Mammary epithelial cell (primary cell): ENCODE measurements at regions of chr6 and their contacts with region 1.

Region 1: DNA sequence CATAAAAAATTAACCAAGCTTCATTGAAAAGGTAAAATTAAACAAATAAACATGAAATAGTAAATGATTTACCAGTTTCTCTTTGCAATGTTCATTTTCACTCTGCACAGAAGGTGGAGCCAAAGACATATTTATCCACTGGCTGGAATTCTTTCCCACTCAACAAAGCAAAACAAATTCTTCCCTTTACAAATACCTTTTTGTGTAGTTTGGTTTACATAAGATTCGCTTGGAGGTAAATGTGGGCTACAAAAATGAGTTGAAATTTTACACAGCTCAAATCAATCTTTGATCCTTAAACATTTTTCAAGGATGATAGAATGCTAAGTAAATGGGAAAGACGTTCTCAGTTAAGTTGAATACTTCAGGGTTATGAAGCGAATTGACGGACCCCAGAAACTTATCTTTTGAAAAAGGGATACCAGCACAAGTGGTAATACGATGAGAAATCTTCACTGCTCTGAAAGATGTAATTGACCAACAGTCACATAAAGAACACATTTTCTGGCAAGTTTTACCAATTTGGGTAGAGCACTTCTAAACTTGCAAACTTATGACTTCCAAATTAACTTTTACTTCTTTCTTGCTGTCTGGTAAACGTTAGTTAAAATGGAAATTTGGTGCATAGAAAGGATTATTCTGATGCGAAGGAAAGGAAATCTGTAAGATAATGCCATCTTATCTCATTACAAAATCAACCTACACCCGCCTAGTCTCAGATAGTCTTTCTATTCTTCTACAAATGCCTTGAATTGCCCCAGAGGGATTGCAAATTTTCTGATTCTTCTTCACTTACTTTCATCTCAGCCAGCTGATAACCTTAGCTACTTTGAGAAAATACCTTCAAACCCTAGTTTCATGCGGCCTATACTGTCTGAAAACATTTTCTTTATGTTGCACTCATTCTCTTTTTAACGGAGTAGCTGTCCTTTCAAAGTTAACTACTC is 4.7 kb upstream of the GJA1 start:
- DNase-seq: no peak
- H3K4me3 ChIP-seq: no peak overlapping the region
- H3K27ac ChIP-seq: no peak overlapping the region
- H3K4me1 ChIP-seq: no peaks in the 10 kb centered on the region
- H3K27me3 ChIP-seq: no peaks in the 10 kb centered on the region
- CTCF ChIP-seq: peak; percentile 63 to 68

Region 2: GRCh38 chr6:120951258-120951657 is 479.5 kb before region 1 on chr6:
- CTCF ChIA-PET with region 1: no interaction called
- dilution Hi-C with region 1: no loop called
- in situ Hi-C with region 1: no loop called
- intact Hi-C with region 1: no loop called
- DNase-seq: no peak
- H3K4me3 ChIP-seq: no peak overlapping the region
- H3K27ac ChIP-seq: no peak overlapping the region
- H3K4me1 ChIP-seq: no peaks in the 10 kb centered on the region
- H3K27me3 ChIP-seq: no peaks in the 10 kb centered on the region
- CTCF ChIP-seq: no peak

Region 3: DNA sequence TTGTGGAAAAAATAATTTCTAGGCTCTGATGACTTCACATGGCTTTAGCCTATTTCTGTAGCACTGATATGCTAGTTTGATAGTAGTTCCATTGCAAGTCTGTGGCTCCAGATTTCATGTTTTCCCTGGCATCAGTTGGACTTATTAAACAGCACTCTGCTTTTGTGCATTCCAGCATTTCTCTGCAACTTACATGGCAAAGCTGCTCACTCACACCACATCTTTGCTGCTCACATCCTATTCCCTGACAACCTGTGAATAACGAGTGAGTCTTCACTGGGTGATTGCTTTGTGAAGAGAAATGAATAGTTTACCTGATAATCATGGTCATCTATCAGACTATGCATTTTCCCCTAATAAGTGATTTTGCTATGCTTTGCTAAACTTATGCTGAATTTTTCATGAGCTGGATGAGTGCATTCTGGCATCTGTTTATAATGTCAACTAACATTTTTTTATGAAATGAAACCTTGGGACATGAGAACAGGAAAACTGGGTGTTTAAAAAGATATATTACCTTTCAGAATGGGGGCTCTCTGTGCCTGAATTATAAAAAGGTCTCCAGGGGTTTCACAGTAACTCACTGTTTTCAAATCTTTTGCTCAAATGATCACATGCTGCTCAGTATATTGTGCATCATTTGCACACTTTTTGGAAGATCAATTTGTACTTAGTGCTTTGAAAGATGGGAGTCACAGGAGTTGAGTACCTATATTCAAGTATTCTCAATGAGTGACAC is 398.4 kb before region 1 on chr6:
- CTCF ChIA-PET with region 1: no interaction called
- dilution Hi-C with region 1: no loop called
- in situ Hi-C with region 1: no loop called
- intact Hi-C with region 1: no loop called
- DNase-seq: no peak
- H3K4me3 ChIP-seq: no peak overlapping the region
- H3K27ac ChIP-seq: no peak overlapping the region
- H3K4me1 ChIP-seq: no peaks in the 10 kb centered on the region
- H3K27me3 ChIP-seq: no peaks in the 10 kb centered on the region
- CTCF ChIP-seq: no peak

Region 4: DNA sequence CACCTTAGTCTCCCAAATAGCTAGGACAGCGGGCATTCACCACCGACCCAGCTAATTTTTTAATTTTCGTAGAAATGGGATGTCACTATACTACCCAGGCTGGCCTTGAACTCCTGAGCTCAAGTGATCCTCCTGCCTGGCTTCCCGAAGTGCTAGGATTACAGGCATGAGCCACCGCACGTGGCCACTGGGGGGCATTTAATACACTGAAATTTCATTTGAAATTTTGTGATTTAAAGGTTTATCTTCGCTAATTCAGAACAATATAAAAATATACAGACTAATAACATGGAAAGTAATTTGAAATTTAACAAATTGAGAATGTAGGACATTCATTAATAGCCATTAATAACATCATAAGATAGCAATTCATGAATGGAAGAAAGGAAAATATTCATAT is 76.0 kb before region 1 on chr6:
- CTCF ChIA-PET with region 1: no interaction called
- dilution Hi-C with region 1: no loop called
- in situ Hi-C with region 1: no loop called
- intact Hi-C with region 1: no loop called
- DNase-seq: no peak
- H3K4me3 ChIP-seq: no peak overlapping the region
- H3K27ac ChIP-seq: no peak overlapping the region
- H3K4me1 ChIP-seq: no peaks in the 10 kb centered on the region
- H3K27me3 ChIP-seq: peaks cover 2% of the 10 kb centered on the region
- CTCF ChIP-seq: peak; percentile 28 to 36

Region 5: GRCh38 chr6:121555236-121555635 is 124.4 kb after region 1 on chr6:
- CTCF ChIA-PET with region 1: no interaction called
- dilution Hi-C with region 1: no loop called
- in situ Hi-C with region 1: no loop called
- intact Hi-C with region 1: no loop called
- DNase-seq: no peak
- H3K4me3 ChIP-seq: no peak overlapping the region
- H3K27ac ChIP-seq: no peak overlapping the region
- H3K4me1 ChIP-seq: peaks cover 5% of the 10 kb centered on the region
- H3K27me3 ChIP-seq: no peaks in the 10 kb centered on the region
- CTCF ChIP-seq: no peak

Region 6: GRCh38 chr6:121849477-121849876 is 418.7 kb after region 1 on chr6:
- CTCF ChIA-PET with region 1: interaction called, 7 read pairs
- dilution Hi-C with region 1: no loop called
- in situ Hi-C with region 1: loop called (anchors 5 kb)
- intact Hi-C with region 1: loop called (anchors 1 kb)
- DNase-seq: peak; percentile 48
- H3K4me3 ChIP-seq: no peak overlapping the region
- H3K27ac ChIP-seq: no peak overlapping the region
- H3K4me1 ChIP-seq: no peaks in the 10 kb centered on the region
- H3K27me3 ChIP-seq: no peaks in the 10 kb centered on the region
- CTCF ChIP-seq: peak; percentile 89 to 90

Region 7: DNA sequence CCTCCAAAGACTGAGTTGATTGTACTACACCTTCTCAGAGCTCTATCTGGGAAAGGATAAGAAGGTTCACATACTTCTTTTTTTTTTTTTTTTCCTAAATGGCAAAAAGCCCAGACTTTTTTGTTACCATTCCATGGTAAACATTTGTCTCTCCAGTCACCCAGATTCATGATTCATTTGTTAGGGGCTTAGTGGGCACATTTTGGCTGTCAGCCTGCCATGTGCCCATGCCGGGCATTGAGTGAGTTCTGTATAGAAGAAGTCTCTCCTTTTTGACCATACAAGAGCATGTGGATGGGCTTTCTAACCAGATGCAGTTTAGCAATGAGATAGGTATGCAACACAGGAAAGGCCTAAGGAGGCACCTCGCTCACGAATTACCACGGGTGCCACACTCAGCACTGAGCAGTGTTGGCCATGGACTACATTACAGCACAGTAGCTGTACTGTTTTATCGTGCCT is 521.2 kb after region 1 on chr6:
- CTCF ChIA-PET with region 1: no interaction called
- dilution Hi-C with region 1: no loop called
- in situ Hi-C with region 1: no loop called
- intact Hi-C with region 1: loop called (anchors 10 kb)
- DNase-seq: peak; percentile 79
- H3K4me3 ChIP-seq: no peak overlapping the region
- H3K27ac ChIP-seq: peak overlapping the region; percentile 41
- H3K4me1 ChIP-seq: peaks cover 10% of the 10 kb centered on the region
- H3K27me3 ChIP-seq: no peaks in the 10 kb centered on the region
- CTCF ChIP-seq: no peak

Region 8: GRCh38 chr6:122020588-122021264 is 589.9 kb after region 1 on chr6:
- CTCF ChIA-PET with region 1: no interaction called
- dilution Hi-C with region 1: loop called (anchors 25 kb)
- in situ Hi-C with region 1: loop called in 1 of 2 experiments (anchors 10 kb)
- intact Hi-C with region 1: no loop called
- DNase-seq: no peak
- H3K4me3 ChIP-seq: no peak overlapping the region
- H3K27ac ChIP-seq: no peak overlapping the region
- H3K4me1 ChIP-seq: peaks cover 9% of the 10 kb centered on the region
- H3K27me3 ChIP-seq: no peaks in the 10 kb centered on the region
- CTCF ChIP-seq: no peak

Region 9: DNA sequence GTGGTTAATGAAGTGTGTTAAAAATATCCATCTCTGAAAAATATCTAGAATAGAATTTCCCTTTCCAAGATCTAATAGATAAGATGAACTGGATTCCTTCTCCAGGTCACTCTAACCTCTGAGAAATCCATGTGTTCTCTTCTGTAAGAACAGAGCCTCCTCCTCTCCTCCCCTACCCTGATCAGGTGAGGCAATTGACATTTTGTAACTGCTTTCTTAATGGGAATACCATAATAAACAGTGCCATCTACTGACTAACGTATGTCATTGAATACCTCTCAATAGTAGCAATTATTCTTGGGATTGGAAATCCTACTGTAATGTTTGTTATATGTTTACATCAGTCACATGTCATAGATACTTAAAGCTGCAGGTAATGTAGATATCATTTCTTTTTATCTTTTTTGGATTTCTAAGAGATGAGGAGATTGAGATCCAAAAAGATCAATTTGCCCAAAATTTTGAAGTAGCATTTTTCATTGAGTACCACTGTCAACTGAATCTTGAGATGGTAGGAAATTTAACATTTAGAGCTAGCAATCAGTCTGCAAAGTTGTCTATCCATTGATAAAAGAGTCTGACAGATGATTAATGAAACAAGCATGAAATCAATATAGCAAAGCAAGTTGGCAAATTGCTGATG is 602.9 kb after region 1 on chr6:
- CTCF ChIA-PET with region 1: no interaction called
- dilution Hi-C with region 1: loop called (anchors 25 kb)
- in situ Hi-C with region 1: loop called (anchors 10 kb)
- intact Hi-C with region 1: loop called (anchors 1 kb)
- DNase-seq: peak; percentile 47
- H3K4me3 ChIP-seq: no peak overlapping the region
- H3K27ac ChIP-seq: no peak overlapping the region
- H3K4me1 ChIP-seq: peaks cover 9% of the 10 kb centered on the region
- H3K27me3 ChIP-seq: no peaks in the 10 kb centered on the region
- CTCF ChIP-seq: peak; percentile 44 to 65

Region 10: DNA sequence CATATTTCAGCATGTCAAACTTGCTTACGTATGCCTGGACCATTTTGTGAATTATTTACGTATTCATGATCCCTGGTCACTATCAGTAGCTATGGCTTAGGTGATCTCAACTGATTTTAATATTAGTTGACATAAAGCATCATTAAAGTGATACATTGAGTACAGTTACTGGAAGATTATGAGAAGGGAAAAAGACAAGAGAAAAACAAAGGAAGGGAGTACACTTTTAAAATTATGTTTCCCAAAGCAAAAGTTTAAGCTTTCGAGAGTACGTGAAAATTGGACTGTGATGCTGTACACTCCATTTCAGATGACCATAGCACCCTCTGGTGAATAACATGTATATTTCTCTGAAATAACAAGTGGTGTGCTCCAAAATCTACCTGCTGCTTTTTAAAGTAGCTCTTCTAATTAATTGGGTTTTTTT is 753.6 kb after region 1 on chr6:
- CTCF ChIA-PET with region 1: no interaction called
- dilution Hi-C with region 1: no loop called
- in situ Hi-C with region 1: loop called in 1 of 2 experiments (anchors 10 kb)
- intact Hi-C with region 1: loop called (anchors 1 kb)
- DNase-seq: peak; percentile 4
- H3K4me3 ChIP-seq: no peak overlapping the region
- H3K27ac ChIP-seq: no peak overlapping the region
- H3K4me1 ChIP-seq: no peaks in the 10 kb centered on the region
- H3K27me3 ChIP-seq: no peaks in the 10 kb centered on the region
- CTCF ChIP-seq: peak; percentile 9 to 49

Region 11: DNA sequence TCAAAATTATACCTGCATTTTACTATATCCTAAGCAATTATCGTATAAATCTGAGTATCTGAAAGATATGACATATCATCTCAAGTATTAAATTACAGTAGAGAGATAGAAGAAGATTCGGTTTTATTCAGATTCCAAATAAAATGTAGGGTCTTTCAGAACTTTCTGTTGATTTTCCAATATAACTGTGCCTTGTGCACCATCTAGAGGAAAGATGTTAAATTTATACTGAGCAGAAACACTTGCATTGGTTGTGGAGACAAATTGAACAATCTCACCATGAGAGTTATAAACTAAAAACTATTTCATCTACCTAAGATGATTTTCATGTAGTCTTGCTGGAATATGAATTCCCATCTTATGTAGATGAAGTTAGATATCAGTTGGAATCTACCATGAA is 941.9 kb after region 1 on chr6:
- CTCF ChIA-PET with region 1: no interaction called
- dilution Hi-C with region 1: no loop called
- in situ Hi-C with region 1: no loop called
- intact Hi-C with region 1: loop called (anchors 2 kb)
- DNase-seq: no peak
- H3K4me3 ChIP-seq: no peak overlapping the region
- H3K27ac ChIP-seq: no peak overlapping the region
- H3K4me1 ChIP-seq: no peaks in the 10 kb centered on the region
- H3K27me3 ChIP-seq: no peaks in the 10 kb centered on the region
- CTCF ChIP-seq: peak; percentile 7 to 25